CD14-positive monocyte (primary cell): ENCODE measurements at regions of chr2 and their contacts with region 1.

Region 1: GRCh38 chr2:74876081-74876886 is 42.4 kb downstream of the HK2 start:
- DNase-seq: peak; percentile 55 to 86 (median 69)
- H3K4me3 ChIP-seq: peak overlapping the region in 1 of 3 experiments; percentile 18
- H3K4me3 Mint-ChIP-seq: peak overlapping the region in 1 of 2 donors; percentile 21
- H3K27ac ChIP-seq: peak overlapping the region; percentile 98
- H3K27ac Mint-ChIP-seq: peak overlapping the region; percentile 90 to 98 (median 97)
- H3K4me1 ChIP-seq: peaks cover 50% of the 10 kb centered on the region in 2 donors
- H3K4me1 Mint-ChIP-seq: peaks cover 51% of the 10 kb centered on the region
- H3K27me3 ChIP-seq: no peaks in the 10 kb centered on the region
- H3K27me3 Mint-ChIP-seq: peaks cover 0 to 2% (median 1%) of the 10 kb centered on the region in 3 donors
- CTCF ChIP-seq: peak; percentile 78

Region 2: GRCh38 chr2:74690571-74690970 is 185.7 kb before region 1 on chr2:
- intact Hi-C with region 1: loop called (anchors 5 kb)
- DNase-seq: peak; percentile 51 to 67 (median 63)
- H3K4me3 ChIP-seq: no peak overlapping the region
- H3K4me3 Mint-ChIP-seq: no peak overlapping the region
- H3K27ac ChIP-seq: no peak overlapping the region
- H3K27ac Mint-ChIP-seq: no peak overlapping the region
- H3K4me1 ChIP-seq: peaks cover 18 to 19% of the 10 kb centered on the region in 2 donors
- H3K4me1 Mint-ChIP-seq: peaks cover 16% of the 10 kb centered on the region
- H3K27me3 ChIP-seq: peaks cover 2 to 5% of the 10 kb centered on the region in 2 donors
- H3K27me3 Mint-ChIP-seq: peaks cover 0 to 7% (median 0%) of the 10 kb centered on the region in 3 donors
- CTCF ChIP-seq: peak; percentile 83

Region 3: DNA sequence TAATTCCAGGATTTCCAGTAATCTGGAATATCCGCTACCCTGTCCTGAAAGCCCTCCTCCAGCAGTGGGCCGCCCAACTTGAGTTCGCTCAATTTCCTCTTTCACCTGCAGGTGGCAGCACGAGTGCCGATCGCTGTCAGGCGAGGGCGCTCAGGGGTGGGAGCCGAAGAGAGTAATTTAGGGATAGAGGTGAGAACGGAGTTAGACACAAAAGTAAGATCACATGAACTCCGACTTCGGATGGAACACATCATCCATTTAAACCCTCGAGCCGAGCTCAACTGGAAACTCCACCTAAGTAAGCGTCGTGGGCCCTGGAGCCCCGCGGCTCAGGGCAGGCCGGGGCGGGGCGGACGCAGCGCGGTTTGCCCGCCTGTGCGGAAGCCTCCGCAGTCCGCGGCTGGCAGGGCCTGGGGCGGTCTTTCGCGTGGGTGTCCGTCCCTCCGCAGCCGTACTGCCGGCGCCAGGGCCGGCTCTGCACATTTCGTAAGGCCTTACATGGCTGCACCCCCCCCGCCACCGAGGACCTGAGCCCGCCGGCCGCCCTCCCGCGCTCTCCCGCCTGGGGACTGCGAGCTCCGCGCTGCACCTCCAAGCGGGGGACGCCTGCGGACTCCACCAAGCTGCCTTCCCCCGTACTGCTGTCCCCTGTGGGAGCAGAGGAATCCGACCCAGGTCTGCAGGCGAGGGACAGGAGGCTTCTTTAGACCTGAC is 161.0 kb before region 1 on chr2:
- intact Hi-C with region 1: loop called (anchors 2 to 5 kb)
- DNase-seq: peak; percentile 72 to 77 (median 72)
- H3K4me3 ChIP-seq: peak overlapping the region; percentile 38 to 75 (median 54)
- H3K4me3 Mint-ChIP-seq: peak overlapping the region; percentile 91 to 96
- H3K27ac ChIP-seq: peak overlapping the region; percentile 40 to 77
- H3K27ac Mint-ChIP-seq: peak overlapping the region; percentile 47 to 94 (median 89)
- H3K4me1 ChIP-seq: peaks cover 6 to 9% of the 10 kb centered on the region in 2 donors
- H3K4me1 Mint-ChIP-seq: peaks cover 9% of the 10 kb centered on the region
- H3K27me3 ChIP-seq: peaks cover 0 to 5% of the 10 kb centered on the region in 2 donors
- H3K27me3 Mint-ChIP-seq: peaks cover 3 to 5% (median 4%) of the 10 kb centered on the region in 3 donors
- CTCF ChIP-seq: peak; percentile 95

Region 4: GRCh38 chr2:74833418-74834233 is 42.7 kb before region 1 on chr2 and contains the start of gene HK2:
- intact Hi-C with region 1: loop called (anchors 5 kb)
- DNase-seq: peak; percentile 92 to 93 (median 93)
- H3K4me3 ChIP-seq: peak within 1 kb of the TSS; percentile 79 to 91 (median 85)
- H3K4me3 Mint-ChIP-seq: peak within 1 kb of the TSS; percentile 98 to 99
- H3K27ac ChIP-seq: peak within 1 kb of the TSS; percentile 91 to 98
- H3K27ac Mint-ChIP-seq: peak within 1 kb of the TSS; percentile 93 to 99 (median 98)
- H3K4me1 ChIP-seq: peaks cover 44 to 56% of the 10 kb centered on the region in 2 donors
- H3K4me1 Mint-ChIP-seq: peaks cover 48% of the 10 kb centered on the region
- H3K27me3 ChIP-seq: no peaks in the 10 kb centered on the region
- H3K27me3 Mint-ChIP-seq: peaks cover 0 to 3% (median 0%) of the 10 kb centered on the region in 3 donors
- CTCF ChIP-seq: no peak
- polyA plus RNA-seq, gene HK2: 20.3 to 46.7 (median 29.8) TPM

Region 5: GRCh38 chr2:74845217-74846011 is 30.9 kb before region 1 on chr2:
- intact Hi-C with region 1: loop called in 1 of 2 experiments (anchors 2 kb)
- DNase-seq: peak; percentile 95 to 98 (median 97)
- H3K4me3 ChIP-seq: peak overlapping the region in 1 of 3 experiments; percentile 54
- H3K4me3 Mint-ChIP-seq: peak overlapping the region; percentile 35 to 56
- H3K27ac ChIP-seq: peak overlapping the region; percentile 94 to 96
- H3K27ac Mint-ChIP-seq: peak overlapping the region; percentile 96 to 100 (median 99)
- H3K4me1 ChIP-seq: peaks cover 99 to 100% of the 10 kb centered on the region in 2 donors
- H3K4me1 Mint-ChIP-seq: peaks cover 98% of the 10 kb centered on the region
- H3K27me3 ChIP-seq: no peaks in the 10 kb centered on the region
- H3K27me3 Mint-ChIP-seq: peaks cover 0 to 2% (median 0%) of the 10 kb centered on the region in 3 donors
- CTCF ChIP-seq: no peak